ENCODE measurements at regions of chr2 and their contacts with region 1.

Region 1: GRCh38 chr2:233832869-233833311 is 21.4 kb downstream of the HJURP start:
- DNase-seq: no peak
- ATAC-seq: peak; percentile 87
- H3K4me3 ChIP-seq: 0 out of 4 replicates have a peak overlapping the region, but pooled peaks of 1 of the 2 experiments have one; percentile 8
- H3K27ac ChIP-seq: peak overlapping the region; percentile 83
- H3K4me1 ChIP-seq: peaks cover 45% of the 10 kb centered on the region
- H3K27me3 ChIP-seq: no peaks in the 10 kb centered on the region
- CTCF ChIP-seq: peak; percentile 78

Region 2: DNA sequence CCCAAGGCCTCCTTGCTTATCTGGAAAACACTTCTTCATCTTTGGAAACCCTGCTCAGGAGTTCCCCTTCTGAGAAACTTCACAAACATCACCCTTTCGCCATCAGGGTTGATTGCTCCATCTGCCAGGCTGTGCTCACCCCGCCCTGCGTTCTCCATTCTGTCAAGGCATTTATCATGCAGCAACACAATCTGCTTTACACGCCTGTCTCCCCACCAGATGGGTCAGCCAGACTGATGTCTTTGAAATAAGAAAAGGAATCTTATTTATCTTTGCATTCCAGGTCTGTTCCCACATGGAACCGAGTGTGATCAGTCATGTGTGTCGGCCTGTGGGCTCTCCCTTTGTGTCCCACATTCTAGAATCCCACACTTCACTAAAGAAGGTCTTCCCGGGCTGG is 774.0 kb after region 1 on chr2:
- CTCF ChIA-PET with region 1: interaction called, 14 read pairs
- POLR2A ChIA-PET with region 1: no interaction called
- in situ Hi-C with region 1: no loop called
- intact Hi-C with region 1: no loop called
- DNase-seq: no peak
- ATAC-seq: no peak
- H3K4me3 ChIP-seq: no peak overlapping the region
- H3K27ac ChIP-seq: no peak overlapping the region
- H3K4me1 ChIP-seq: no peaks in the 10 kb centered on the region
- H3K27me3 ChIP-seq: no peaks in the 10 kb centered on the region
- CTCF ChIP-seq: no peak